A549 (cell line): ENCODE measurements at regions of chr15 and their contacts with region 1.

Region 1: GRCh38 chr15:65101411-65101890 is 13.5 kb downstream of the UBAP1L start:
- DNase-seq: peak; percentile 65 to 68
- ATAC-seq: peak; percentile 49 to 84; a peak in 3 of 6 replicates
- H3K4me3 ChIP-seq: no peak overlapping the region
- H3K27ac ChIP-seq: no peak overlapping the region
- H3K4me1 ChIP-seq: no peaks in the 10 kb centered on the region
- CTCF ChIP-seq: peak; percentile 79
- EP300 ChIP-seq: no peak
- POLR2A ChIP-seq: no peak
- RAD21 ChIP-seq: peak; percentile 73 to 78

Region 2: GRCh38 chr15:65049418-65049840 is 52.0 kb before region 1 on chr15:
- CTCF ChIA-PET with region 1: interaction called, 52 read pairs
- POLR2A ChIA-PET with region 1: no interaction called
- DNase-seq: peak; percentile 86 to 90
- ATAC-seq: peak; percentile 68 to 79
- H3K4me3 ChIP-seq: peak overlapping the region; percentile 31
- H3K27ac ChIP-seq: no peak overlapping the region; a peak in 1 of 6 replicates
- H3K4me1 ChIP-seq: peaks cover 33% of the 10 kb centered on the region
- CTCF ChIP-seq: no peak
- EP300 ChIP-seq: no peak
- POLR2A ChIP-seq: no peak
- RAD21 ChIP-seq: no peak

Region 3: GRCh38 chr15:65054333-65055200 is 46.9 kb before region 1 on chr15:
- CTCF ChIA-PET with region 1: interaction called, 52 read pairs
- POLR2A ChIA-PET with region 1: no interaction called
- DNase-seq: peak; percentile 79 to 93
- ATAC-seq: peak; percentile 83 to 91
- H3K4me3 ChIP-seq: no peak overlapping the region
- H3K27ac ChIP-seq: peak overlapping the region; percentile 43 to 75
- H3K4me1 ChIP-seq: peaks cover 51% of the 10 kb centered on the region
- CTCF ChIP-seq: peak; percentile 94
- EP300 ChIP-seq: no peak
- POLR2A ChIP-seq: no peak
- RAD21 ChIP-seq: peak; percentile 95 to 98

Region 4: GRCh38 chr15:65060641-65061397 is 40.6 kb before region 1 on chr15:
- CTCF ChIA-PET with region 1: interaction called, 52 read pairs
- POLR2A ChIA-PET with region 1: no interaction called
- DNase-seq: no peak
- ATAC-seq: no peak
- H3K4me3 ChIP-seq: no peak overlapping the region
- H3K27ac ChIP-seq: no peak overlapping the region
- H3K4me1 ChIP-seq: peaks cover 26% of the 10 kb centered on the region
- CTCF ChIP-seq: no peak
- EP300 ChIP-seq: no peak
- POLR2A ChIP-seq: no peak
- RAD21 ChIP-seq: no peak

Region 5: GRCh38 chr15:65077981-65078352 is 23.5 kb before region 1 on chr15:
- CTCF ChIA-PET with region 1: interaction called, 38 read pairs
- POLR2A ChIA-PET with region 1: no interaction called
- DNase-seq: peak; percentile 91 to 92
- ATAC-seq: peak; percentile 93 to 98
- H3K4me3 ChIP-seq: no peak overlapping the region
- H3K27ac ChIP-seq: peak overlapping the region; percentile 17 to 65; a peak in 5 of 6 replicates
- H3K4me1 ChIP-seq: peaks cover 7% of the 10 kb centered on the region; the same call in 1 of the 3 replicates
- CTCF ChIP-seq: peak; percentile 93
- EP300 ChIP-seq: no peak
- POLR2A ChIP-seq: no peak
- RAD21 ChIP-seq: peak; percentile 84 to 95

Region 6: DNA sequence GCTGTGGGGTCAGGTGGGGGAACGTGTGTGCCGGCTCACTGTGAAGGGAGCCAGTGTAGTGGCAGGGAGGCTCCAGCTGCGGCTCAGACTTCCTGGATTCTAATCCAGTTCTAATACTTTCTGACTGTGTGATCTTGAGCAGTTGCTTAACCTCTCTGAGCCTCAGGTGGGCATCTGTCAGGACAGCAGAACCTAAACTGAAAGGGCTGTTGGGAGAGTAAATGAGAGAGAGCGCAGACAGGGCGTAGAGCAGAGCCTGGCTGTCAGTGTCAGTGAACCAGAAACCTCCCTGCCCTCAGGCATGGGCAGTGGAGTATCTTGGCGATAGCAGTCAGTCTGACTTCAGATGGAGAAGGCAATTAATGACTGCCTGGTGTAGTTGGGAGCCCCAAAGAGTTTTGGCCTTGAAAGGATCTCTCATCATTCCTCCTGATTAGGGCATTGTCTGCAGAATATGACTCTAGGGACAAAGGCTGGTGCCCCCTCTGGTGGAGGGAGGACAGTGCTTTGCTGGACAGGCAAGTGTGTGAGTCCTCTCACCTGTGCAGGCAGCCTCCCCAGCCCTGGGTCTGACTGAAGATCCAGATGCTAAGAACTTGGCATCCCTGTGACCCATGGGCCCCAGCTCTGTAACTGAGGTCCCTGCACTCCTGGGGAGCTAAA is 15.3 kb before region 1 on chr15:
- CTCF ChIA-PET with region 1: interaction called, 23 read pairs
- POLR2A ChIA-PET with region 1: no interaction called
- DNase-seq: peak; percentile 64 to 71
- ATAC-seq: peak; percentile 68 to 83
- H3K4me3 ChIP-seq: no peak overlapping the region
- H3K27ac ChIP-seq: no peak overlapping the region
- H3K4me1 ChIP-seq: no peaks in the 10 kb centered on the region
- CTCF ChIP-seq: peak; percentile 56
- EP300 ChIP-seq: no peak
- POLR2A ChIP-seq: no peak
- RAD21 ChIP-seq: peak in 1 of 2 experiments; percentile 53; a peak in 3 of 5 replicates

Region 7: GRCh38 chr15:65133548-65134200 is 32.2 kb after region 1 on chr15 and contains the start of gene PDCD7:
- CTCF ChIA-PET with region 1: interaction called, 16 read pairs
- POLR2A ChIA-PET with region 1: no interaction called
- DNase-seq: peak; percentile 96 to 98
- ATAC-seq: peak; percentile 94 to 97
- H3K4me3 ChIP-seq: peak within 1 kb of the TSS; percentile 81
- H3K27ac ChIP-seq: peak within 1 kb of the TSS; percentile 78 to 86
- H3K4me1 ChIP-seq: peaks cover 11% of the 10 kb centered on the region
- CTCF ChIP-seq: no peak
- EP300 ChIP-seq: no peak
- POLR2A ChIP-seq: peak; percentile 96
- RAD21 ChIP-seq: no peak
- polyA plus RNA-seq, gene PDCD7: 20.4 and 23.7 TPM in 2 replicates